AG04449 (cell line): ENCODE measurements at regions of chr9 and their contacts with region 1.

Region 1: DNA sequence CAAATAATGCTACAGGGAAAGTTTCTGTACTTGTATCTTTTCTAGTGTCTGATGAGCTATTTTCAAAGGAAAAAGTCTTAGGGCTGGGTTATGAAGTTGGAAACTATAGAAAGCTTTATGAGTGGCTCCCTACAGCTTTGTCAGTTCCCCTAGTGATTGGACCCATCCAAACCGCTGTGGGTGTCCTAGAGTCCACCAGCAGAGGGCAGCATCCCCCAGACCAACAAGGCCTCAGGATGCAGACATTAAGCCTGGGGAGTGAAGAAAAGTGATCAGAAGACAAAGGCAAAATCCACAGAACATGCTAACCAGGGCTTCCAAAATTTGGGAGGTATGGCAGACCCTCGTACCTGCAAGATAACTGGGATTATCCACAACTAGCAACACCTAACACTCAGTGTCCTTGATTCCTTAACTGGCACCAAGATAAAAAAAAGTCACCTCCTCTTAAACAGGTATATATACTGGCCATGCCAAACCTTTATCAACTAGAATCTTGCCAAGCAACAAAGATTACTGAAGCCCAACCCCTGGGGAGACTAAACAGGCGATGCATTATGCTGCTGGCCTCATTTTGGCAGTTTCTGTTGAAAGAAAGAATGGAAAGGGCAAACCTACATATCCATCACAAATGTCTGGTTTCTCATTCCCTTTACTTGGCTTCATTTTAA is 110.4 kb upstream of the NR5A1 start:
- DNase-seq: no peak
- H3K4me3 ChIP-seq: no peak overlapping the region
- CTCF ChIP-seq: peak; percentile 88

Region 2: DNA sequence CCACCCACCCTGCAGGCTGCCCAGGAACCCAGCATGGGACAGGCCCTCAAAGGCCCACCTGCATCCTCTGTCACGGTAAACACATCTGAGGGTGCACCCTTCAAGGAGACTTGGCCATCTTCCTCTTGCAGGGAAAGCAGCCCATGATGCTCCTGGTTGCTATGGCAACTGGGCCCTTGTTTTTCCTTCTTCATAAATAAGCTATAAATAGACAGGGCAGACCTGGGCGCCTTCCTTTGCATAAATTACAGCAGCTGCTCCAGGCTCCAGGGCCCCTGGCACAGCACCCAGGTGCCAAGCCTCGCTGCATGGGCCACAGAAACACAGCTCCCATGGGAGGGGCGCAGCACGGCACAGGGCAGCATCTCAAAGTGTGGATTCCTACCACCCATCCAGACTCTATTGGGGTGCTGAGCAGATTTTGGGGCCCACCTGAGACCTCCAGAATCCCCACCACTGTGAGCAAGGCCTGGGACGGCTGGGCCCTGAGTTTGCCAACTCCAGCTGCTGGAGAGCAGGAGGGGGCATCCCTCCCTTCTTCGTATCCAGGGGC is 196.5 kb before region 1 on chr9:
- CTCF ChIA-PET with region 1: interaction called, 10 read pairs
- POLR2A ChIA-PET with region 1: no interaction called
- DNase-seq: no peak
- H3K4me3 ChIP-seq: no peak overlapping the region
- CTCF ChIP-seq: no peak

Region 3: DNA sequence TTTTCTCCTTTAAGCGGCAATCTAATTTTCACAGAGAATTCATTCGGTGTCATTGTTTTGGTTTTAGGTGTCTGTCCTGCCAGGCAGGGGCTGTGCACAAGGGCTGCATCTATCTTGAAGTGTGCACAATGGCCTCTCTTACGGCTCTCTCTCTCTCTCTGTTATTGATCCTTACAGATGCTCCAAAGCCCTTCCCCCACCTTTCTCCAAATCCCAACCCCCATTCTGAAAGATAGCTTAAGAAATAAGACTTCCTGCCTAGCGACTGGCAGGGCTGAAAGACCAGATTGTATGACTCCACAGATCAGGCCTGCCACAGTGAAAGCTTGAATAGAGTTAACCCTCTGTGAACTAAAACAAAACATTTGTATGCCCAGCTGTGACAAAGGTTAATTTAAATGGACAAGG is 24.0 kb before region 1 on chr9:
- CTCF ChIA-PET with region 1: interaction called, 44 read pairs
- POLR2A ChIA-PET with region 1: no interaction called
- DNase-seq: no peak
- H3K4me3 ChIP-seq: no peak overlapping the region
- CTCF ChIP-seq: no peak

Region 4: GRCh38 chr9:124652203-124652992 is 34.8 kb after region 1 on chr9:
- CTCF ChIA-PET with region 1: interaction called, 65 read pairs
- POLR2A ChIA-PET with region 1: no interaction called
- DNase-seq: peak; percentile 97
- H3K4me3 ChIP-seq: no peak overlapping the region
- CTCF ChIP-seq: no peak

Region 5: DNA sequence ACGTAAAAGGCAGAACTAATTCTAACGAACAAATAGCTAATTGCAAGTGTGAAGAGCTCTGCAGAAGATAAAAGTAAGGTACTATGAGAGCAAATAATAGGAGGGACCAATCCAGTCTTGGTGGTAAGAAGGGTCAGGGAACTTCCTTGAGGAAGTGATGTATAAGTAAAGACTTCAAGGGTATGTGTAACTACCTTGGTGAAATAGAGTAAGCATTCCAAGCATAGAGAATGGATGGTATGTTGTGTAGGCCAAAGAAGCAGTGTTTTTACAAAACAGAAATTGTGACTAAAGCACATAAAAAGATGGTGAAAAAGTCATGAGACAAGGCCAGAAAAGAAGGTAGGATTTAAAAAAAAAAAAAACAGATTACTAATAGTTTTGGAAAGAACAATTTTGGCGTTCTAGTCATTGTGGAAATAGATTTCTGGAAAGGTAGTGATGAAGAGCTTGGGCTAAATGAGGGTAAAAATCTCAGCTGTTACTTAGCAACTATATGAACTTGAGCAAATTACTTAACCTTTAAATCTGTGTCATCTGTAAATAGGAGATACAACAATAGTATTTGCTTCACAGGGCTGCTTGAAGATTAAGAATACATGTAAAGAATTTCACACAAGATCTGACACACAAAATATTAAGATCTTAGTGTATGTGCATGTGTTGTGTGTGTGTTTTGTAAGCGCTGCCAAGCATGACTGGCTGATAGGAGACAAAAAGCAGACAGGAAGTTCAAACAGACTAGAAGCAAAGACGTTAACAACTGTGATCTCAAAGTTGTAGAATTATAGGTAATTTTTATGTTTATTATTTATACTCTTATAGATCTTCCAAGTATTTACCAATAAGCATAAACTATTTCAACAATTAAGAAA is 80.0 kb after region 1 on chr9:
- CTCF ChIA-PET with region 1: interaction called, 23 read pairs
- POLR2A ChIA-PET with region 1: no interaction called
- DNase-seq: peak; percentile 59
- H3K4me3 ChIP-seq: no peak overlapping the region
- CTCF ChIP-seq: no peak

Region 6: GRCh38 chr9:124754289-124754688 is 136.7 kb after region 1 on chr9:
- CTCF ChIA-PET with region 1: interaction called, 97 read pairs
- POLR2A ChIA-PET with region 1: no interaction called
- DNase-seq: no peak
- H3K4me3 ChIP-seq: no peak overlapping the region
- CTCF ChIP-seq: peak; percentile 62

Region 7: GRCh38 chr9:125074976-125075375 is 457.4 kb after region 1 on chr9:
- CTCF ChIA-PET with region 1: no interaction called
- POLR2A ChIA-PET with region 1: no interaction called
- DNase-seq: peak; percentile 17
- H3K4me3 ChIP-seq: no peak overlapping the region
- CTCF ChIP-seq: no peak

Region 8: DNA sequence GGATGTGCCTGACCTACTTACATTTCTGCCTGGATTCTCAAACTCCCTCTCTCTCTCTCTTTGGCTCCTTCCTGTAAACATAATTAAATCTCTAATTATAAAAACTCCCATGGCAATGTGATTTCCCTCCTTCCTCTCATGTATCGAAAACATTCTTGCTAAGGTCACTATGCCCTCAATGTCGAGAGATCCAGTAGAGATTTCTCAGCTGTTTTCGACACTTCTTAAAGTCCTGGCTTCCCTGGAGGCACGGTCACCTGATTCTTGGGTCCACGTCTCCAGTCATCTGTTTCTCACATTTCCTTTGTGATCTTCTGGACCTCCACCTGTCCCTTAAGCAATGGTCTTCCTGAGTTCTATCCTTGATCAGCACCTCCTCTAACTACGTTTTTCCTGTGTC is 833.4 kb after region 1 on chr9:
- CTCF ChIA-PET with region 1: no interaction called
- POLR2A ChIA-PET with region 1: no interaction called
- DNase-seq: no peak
- H3K4me3 ChIP-seq: no peak overlapping the region
- CTCF ChIP-seq: no peak